SK-N-SH (cell line): ENCODE measurements at regions of chr5 and their contacts with region 1.

Region 1: DNA sequence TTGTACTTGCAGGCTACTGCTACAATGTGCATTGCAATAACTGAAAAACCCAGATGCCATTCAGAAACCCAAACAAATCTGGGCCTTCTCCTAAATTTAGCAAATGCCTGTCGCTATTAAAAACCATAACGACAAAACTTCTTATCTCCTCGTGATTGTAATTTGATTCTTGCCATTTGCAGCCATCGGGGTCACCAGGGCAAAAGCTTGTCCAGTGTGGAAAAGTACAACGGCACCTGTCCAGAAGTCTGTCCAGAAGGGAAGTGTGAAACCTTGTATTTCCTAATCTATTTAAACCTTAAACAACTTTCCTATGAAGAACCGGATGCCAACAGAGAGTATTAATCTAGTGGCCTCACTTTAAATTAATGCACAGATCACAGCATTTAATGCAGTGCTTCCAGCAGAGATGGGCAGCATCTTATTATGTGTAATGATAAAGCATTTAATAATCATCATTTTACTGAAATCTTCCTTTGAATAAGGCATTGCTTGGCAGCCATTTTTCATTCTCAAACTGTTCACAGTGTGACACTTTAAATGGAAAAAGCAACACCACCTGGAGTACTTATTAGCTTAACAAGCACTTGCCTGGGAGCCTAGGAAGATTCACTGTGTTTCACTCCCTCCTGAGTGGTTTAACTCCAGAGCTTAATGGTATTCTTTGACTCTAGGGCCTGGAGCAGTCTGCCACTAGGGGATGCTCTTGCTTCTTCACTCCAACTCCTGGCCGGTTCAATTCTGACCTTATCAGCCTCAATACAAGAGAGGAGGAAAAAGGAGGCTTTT is 4.9 kb upstream of the C7 start:
- DNase-seq: peak; percentile 67
- H3K4me3 ChIP-seq: peak overlapping the region in 1 of 2 experiments; percentile 43; a peak in 1 of 4 replicates
- H3K27ac ChIP-seq: peak overlapping the region in 1 of 2 experiments; percentile 86; a peak in 2 of 4 replicates
- H3K4me1 ChIP-seq: peaks cover 0 to 13% of the 10 kb centered on the region in 2 experiments; a peak in 2 of 4 replicates
- H3K27me3 ChIP-seq: no peaks in the 10 kb centered on the region
- CTCF ChIP-seq: peak; percentile 87
- EP300 ChIP-seq: peak in 1 of 2 experiments; percentile 37; a peak in 1 of 4 replicates
- RAD21 ChIP-seq: peak; percentile 98

Region 2: GRCh38 chr5:40716000-40716399 is 188.4 kb before region 1 on chr5:
- CTCF ChIA-PET with region 1: no interaction called
- POLR2A ChIA-PET with region 1: no interaction called
- DNase-seq: no peak
- H3K4me3 ChIP-seq: no peak overlapping the region
- H3K27ac ChIP-seq: no peak overlapping the region
- H3K4me1 ChIP-seq: no peaks in the 10 kb centered on the region
- H3K27me3 ChIP-seq: no peaks in the 10 kb centered on the region
- CTCF ChIP-seq: peak; percentile 28; the same call in 1 of the 2 replicates
- EP300 ChIP-seq: no peak
- RAD21 ChIP-seq: no peak

Region 3: GRCh38 chr5:40914835-40915234 is 10.4 kb after region 1 on chr5:
- CTCF ChIA-PET with region 1: interaction called, 14 read pairs
- POLR2A ChIA-PET with region 1: no interaction called
- DNase-seq: no peak
- H3K4me3 ChIP-seq: no peak overlapping the region
- H3K27ac ChIP-seq: peak overlapping the region in 1 of 2 experiments; percentile 23; a peak in 1 of 4 replicates
- H3K4me1 ChIP-seq: peaks cover 0 to 4% of the 10 kb centered on the region in 2 experiments; a peak in 1 of 4 replicates
- H3K27me3 ChIP-seq: no peaks in the 10 kb centered on the region
- CTCF ChIP-seq: no peak
- EP300 ChIP-seq: no peak
- RAD21 ChIP-seq: no peak

Region 4: GRCh38 chr5:41252036-41252435 is 347.6 kb after region 1 on chr5:
- CTCF ChIA-PET with region 1: interaction called, 13 read pairs
- POLR2A ChIA-PET with region 1: no interaction called
- DNase-seq: no peak
- H3K4me3 ChIP-seq: no peak overlapping the region
- H3K27ac ChIP-seq: no peak overlapping the region
- H3K4me1 ChIP-seq: no peaks in the 10 kb centered on the region
- H3K27me3 ChIP-seq: no peaks in the 10 kb centered on the region
- CTCF ChIP-seq: no peak
- EP300 ChIP-seq: no peak
- RAD21 ChIP-seq: no peak

Region 5: DNA sequence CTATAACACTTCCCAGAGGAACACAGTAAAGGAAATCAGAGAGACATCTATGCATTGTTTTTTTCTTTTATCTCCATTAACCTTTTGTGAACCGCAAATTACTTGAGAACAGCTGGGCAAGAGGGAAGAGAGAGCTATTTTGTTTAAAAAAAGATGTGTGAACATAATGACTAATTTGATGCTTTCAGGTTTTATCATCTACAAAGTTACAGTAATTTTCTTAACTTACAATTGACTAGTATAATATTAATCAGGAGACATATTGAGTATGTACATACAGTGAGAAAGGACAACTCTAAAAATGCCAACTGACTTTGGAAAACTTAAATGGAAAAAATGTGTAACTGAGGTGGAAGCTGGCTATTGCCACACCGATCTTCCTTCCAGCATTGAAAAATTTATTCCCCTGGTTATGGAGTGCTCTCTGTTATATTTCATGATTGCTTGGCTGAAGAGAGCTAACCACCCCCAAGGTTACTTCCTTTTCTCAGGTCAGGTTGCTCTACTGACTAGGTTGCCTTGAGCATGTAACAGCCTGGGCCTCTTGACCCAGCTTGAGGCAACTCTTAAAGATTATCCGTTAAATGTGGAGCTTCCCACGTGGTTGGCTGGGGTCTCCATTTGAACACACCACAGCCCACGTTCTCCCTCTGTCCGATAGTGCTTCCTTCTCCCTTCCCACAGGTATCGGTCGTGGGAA is 371.6 kb after region 1 on chr5:
- CTCF ChIA-PET with region 1: interaction called, 25 read pairs
- POLR2A ChIA-PET with region 1: interaction called, 3 read pairs
- DNase-seq: no peak
- H3K4me3 ChIP-seq: no peak overlapping the region
- H3K27ac ChIP-seq: no peak overlapping the region
- H3K4me1 ChIP-seq: peaks cover 0 to 7% of the 10 kb centered on the region in 2 experiments; a peak in 1 of 4 replicates
- H3K27me3 ChIP-seq: no peaks in the 10 kb centered on the region
- CTCF ChIP-seq: no peak
- EP300 ChIP-seq: no peak
- RAD21 ChIP-seq: no peak

Region 6: DNA sequence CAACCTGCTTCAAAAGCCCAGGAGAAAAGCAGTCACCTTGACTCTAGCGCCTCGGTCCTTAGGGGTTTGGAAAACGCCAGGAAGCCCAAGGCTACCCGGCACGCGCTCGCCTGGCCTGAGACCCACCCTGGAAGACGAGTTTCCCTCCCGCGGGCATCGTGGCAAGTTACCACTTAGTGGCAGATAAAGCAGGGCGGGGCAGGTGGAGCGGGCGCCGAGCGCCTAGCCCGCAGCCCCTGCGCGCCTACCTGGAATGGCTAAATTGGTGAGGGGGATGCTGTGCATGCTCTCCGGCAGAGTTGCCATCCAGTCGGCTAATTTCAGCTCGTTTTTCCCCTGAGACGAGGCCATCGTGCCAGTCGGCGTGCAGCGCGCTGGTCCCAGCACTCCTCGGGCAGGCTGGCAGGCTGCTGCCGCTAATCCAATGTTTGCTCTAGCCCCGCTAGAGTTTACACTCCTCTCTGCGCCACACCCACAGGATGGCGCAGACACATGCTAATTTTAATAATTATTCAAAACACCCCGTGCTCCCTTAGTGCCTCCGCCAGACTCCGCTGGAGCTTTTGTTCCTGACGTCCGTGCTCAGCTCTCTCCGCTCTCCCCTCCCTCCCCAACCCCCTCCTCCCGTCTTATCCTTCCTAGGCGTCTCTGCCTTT is 605.9 kb after region 1 on chr5 and contains the start of gene PLCXD3:
- CTCF ChIA-PET with region 1: interaction called, 38 read pairs
- POLR2A ChIA-PET with region 1: interaction called, 4 read pairs
- DNase-seq: peak; percentile 69
- H3K4me3 ChIP-seq: peak within 1 kb of the TSS; percentile 67 to 71
- H3K27ac ChIP-seq: peak within 1 kb of the TSS in 1 of 2 experiments; percentile 93; a peak in 2 of 4 replicates
- H3K4me1 ChIP-seq: peaks cover 10 to 15% of the 10 kb centered on the region in 2 experiments; a peak in 3 of 4 replicates
- H3K27me3 ChIP-seq: 0 out of 2 replicates have a peak, but pooled peaks cover 9% of the 10 kb centered on the region
- CTCF ChIP-seq: no peak
- EP300 ChIP-seq: no peak
- RAD21 ChIP-seq: no peak
- polyA plus RNA-seq, gene PLCXD3: 0.15 and 0.34 TPM in 2 replicates

Region 7: GRCh38 chr5:41641621-41642020 is 737.2 kb after region 1 on chr5:
- CTCF ChIA-PET with region 1: interaction called, 21 read pairs
- POLR2A ChIA-PET with region 1: no interaction called
- DNase-seq: no peak
- H3K4me3 ChIP-seq: no peak overlapping the region
- H3K27ac ChIP-seq: no peak overlapping the region
- H3K4me1 ChIP-seq: peaks cover 0 to 2% of the 10 kb centered on the region in 2 experiments; a peak in 1 of 4 replicates
- H3K27me3 ChIP-seq: no peaks in the 10 kb centered on the region
- CTCF ChIP-seq: peak; percentile 51
- EP300 ChIP-seq: no peak
- RAD21 ChIP-seq: peak; percentile 64

Region 8: DNA sequence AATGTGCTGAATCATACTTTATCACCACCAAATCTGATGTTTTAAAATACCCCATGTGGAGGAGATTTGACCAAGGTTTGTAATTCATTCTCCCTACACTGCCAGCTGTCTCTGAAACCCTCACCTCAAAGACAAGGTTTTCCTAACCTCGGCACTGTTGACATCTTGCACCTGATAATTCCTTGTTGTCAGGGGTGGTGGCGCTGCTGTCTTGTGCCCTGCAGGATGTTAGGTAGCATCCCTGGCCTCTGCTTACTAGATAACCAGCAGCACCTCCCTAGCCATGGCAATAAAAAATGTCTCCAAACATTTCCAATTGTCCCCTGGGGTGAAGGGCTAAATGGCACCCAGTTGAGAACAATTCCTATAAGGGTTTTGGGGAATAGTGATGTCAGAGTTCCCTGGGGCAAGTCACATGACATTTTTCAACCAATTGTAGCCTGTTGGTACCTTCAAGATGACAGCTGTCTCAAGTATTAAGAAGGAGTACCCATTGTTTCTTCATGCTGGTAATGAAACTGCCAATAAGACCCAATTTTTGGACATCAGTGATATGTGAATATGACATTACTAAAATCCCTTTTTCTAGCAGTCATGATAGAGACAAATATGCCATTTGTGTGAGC is 766.6 kb after region 1 on chr5:
- CTCF ChIA-PET with region 1: no interaction called
- POLR2A ChIA-PET with region 1: no interaction called
- DNase-seq: no peak
- H3K4me3 ChIP-seq: no peak overlapping the region
- H3K27ac ChIP-seq: no peak overlapping the region
- H3K4me1 ChIP-seq: peaks cover 0 to 16% of the 10 kb centered on the region in 2 experiments; a peak in 2 of 4 replicates
- H3K27me3 ChIP-seq: no peaks in the 10 kb centered on the region
- CTCF ChIP-seq: no peak
- EP300 ChIP-seq: no peak
- RAD21 ChIP-seq: no peak

Region 9: DNA sequence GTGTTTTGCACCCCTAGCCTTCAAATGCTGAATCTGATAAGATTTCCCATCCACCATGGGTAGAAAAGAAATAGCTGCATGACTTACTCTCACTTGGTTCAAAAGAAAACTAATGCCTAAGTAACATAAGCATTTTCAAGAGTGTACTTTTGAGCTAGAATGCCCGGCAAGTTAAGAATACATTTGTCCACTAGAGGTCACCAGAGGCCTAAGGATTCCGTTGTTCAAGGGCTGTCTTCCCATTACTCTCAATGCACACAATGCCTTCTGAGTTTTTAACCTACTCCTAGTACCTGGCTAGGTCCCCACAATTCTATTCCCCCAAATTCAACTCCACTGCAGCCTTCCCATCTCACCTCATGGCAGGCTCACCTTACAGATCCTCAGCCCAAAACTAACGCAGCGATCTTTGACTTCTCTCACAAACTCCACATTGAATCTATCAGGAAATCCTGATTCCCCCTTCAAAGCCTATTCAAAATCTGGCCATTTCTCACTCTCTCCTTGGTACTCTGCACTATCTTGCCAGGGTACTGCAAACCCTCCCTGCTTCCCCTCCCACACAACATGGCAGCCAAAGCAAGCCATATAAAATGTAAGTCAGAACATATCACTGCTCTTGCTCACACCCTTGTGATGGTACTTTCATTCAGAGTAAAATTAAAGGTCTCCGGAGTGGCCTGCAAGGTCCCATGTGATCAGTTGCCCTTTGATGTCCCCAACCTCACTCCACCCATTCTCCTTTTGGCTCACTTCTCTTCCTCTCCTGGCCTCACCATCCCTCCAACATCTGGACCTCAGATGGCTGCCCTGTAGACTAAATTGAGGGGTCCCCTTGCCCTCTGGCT is 952.5 kb after region 1 on chr5:
- CTCF ChIA-PET with region 1: interaction called, 10 read pairs
- POLR2A ChIA-PET with region 1: no interaction called
- DNase-seq: peak; percentile 51
- H3K4me3 ChIP-seq: no peak overlapping the region
- H3K27ac ChIP-seq: no peak overlapping the region
- H3K4me1 ChIP-seq: no peaks in the 10 kb centered on the region; a peak in 1 of 4 replicates
- H3K27me3 ChIP-seq: no peaks in the 10 kb centered on the region
- CTCF ChIP-seq: peak; percentile 82
- EP300 ChIP-seq: no peak
- RAD21 ChIP-seq: peak; percentile 92